ENCODE measurements at regions of chr21 and their contacts with region 1.

Region 1: GRCh38 chr21:32403201-32403777 is 9.2 kb upstream of the EVA1C start:
- DNase-seq: peak; percentile 55
- H3K4me3 Mint-ChIP-seq: no peak overlapping the region
- H3K27ac Mint-ChIP-seq: no peak overlapping the region
- H3K4me1 Mint-ChIP-seq: peaks cover 9% of the 10 kb centered on the region
- H3K27me3 Mint-ChIP-seq: peaks cover 7% of the 10 kb centered on the region

Region 2: DNA sequence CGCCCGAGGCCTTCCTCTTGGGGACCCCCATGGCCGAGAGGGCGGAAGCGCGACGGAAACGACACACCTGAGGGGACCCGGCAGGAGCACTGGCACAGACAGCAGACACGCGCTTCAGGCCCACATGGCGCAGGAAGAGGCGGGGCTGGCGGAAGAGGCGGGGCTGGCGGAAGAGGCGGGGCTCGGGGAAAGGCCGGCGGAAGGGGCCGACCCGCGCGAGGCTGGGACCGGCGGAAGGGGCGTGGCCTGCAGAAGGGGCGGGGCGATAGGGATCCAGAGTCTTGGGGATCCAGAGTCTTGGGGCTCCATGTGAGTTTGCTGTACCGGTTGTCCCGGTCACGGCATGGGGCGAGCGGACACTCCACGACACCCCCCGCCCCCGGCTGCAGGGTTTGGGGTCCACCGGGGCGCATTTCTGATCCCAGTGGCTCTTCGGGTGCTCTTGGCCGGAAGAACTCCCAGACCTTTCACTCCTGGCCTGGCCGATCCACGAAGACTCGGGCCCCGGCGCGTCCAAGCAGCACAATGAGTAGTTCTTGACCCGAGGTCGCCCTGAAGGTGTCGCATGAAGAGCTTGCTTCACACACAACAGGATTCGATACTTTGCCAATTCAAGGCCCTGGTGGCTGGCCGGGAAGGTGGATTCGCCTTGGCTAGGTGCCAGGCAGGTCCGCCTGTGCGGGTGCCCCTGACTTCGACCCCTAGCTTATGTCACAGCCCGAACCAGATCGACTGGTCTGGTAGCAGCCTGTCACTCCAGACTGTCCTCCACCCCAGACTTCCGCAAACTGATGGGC is 10.2 kb before region 1 on chr21 and contains the start of gene URB1:
- CTCF ChIA-PET with region 1: interaction called, 11 read pairs
- POLR2A ChIA-PET with region 1: interaction called, 4 read pairs
- DNase-seq: peak; percentile 94
- H3K4me3 Mint-ChIP-seq: peak within 1 kb of the TSS; percentile 79
- H3K27ac Mint-ChIP-seq: peak within 1 kb of the TSS; percentile 73
- H3K4me1 Mint-ChIP-seq: peaks cover 42% of the 10 kb centered on the region
- H3K27me3 Mint-ChIP-seq: peaks cover 2% of the 10 kb centered on the region
- total RNA-seq, gene URB1: 9.1 TPM

Region 3: DNA sequence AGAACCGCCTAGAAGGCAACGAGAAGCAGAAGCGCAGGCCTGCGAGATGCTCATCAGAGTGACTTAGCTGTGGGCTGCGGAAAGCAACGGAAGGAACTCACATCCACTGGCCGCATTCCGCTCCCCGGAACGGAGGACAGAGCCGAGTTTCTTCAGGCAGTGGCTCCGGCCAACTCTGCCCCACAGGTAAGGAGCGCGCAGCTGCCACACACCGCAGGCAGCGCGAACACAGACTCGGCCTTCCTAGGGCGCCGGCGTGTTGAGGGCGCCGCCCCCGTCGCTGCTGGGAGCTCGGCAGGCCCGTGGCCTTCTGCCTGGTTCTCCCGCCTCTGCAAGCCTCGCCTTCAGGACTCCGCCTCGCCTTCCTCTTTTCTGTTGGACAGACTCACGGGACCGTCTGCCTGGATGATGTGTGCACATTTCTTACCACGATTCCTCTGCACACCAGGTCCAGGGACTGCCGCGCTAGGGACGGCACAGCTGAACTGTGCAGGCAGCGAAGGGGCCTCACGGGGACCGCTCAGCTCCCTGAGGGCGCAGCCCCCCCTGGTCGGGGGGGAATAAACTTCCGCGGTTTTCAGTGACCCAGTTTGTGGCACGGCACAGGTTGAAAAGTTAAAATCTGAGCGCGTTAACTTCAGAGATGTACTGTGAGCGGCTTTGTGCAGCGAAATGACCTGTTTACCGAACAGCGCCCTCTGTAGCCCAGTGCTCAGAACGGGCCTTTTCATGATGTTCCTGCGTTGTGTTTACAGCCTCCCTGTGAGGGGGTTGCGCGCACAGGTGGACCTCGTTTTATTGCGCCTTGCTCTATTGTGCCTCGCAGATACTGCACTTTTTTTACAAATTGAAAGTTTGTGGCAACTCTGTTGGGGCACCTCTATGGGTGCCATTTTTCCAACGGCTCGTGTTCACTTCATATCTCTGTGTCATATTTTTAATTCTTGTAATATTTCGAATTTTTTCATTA is 166.3 kb after region 1 on chr21:
- CTCF ChIA-PET with region 1: interaction called, 47 read pairs
- POLR2A ChIA-PET with region 1: interaction called, 3 read pairs
- DNase-seq: peak; percentile 83
- H3K4me3 Mint-ChIP-seq: peak overlapping the region; percentile 78
- H3K27ac Mint-ChIP-seq: peak overlapping the region; percentile 77
- H3K4me1 Mint-ChIP-seq: peaks cover 22% of the 10 kb centered on the region
- H3K27me3 Mint-ChIP-seq: peaks cover 6% of the 10 kb centered on the region

Region 4: DNA sequence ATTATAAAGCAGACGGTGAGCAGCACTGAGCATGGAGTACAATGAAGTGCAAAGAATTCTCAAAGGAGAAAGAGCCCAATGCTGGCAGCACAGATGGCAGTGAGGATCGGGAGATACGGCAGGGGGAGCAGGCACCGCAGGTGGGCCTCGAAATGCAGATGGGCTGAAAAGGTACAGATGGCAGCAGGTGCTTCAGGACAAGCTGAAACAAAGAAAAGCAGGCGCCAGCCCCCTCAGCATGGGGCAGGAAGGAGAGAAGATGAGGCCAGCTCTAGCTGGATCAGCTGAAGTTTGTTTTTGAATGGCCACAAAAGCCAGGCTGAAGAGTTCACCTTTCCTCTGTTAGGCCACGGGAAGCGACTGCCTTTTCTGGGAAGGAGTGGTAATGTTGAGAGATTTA is 201.2 kb after region 1 on chr21:
- CTCF ChIA-PET with region 1: interaction called, 50 read pairs
- POLR2A ChIA-PET with region 1: no interaction called
- DNase-seq: no peak
- H3K4me3 Mint-ChIP-seq: no peak overlapping the region
- H3K27ac Mint-ChIP-seq: no peak overlapping the region
- H3K4me1 Mint-ChIP-seq: peaks cover 3% of the 10 kb centered on the region
- H3K27me3 Mint-ChIP-seq: no peaks in the 10 kb centered on the region